Activated B cell treated with CpG ODN at 0.5 μM for 24 hours (primary cell): ENCODE measurements at regions of chr6 and their contacts with region 1.

Region 1: GRCh38 chr6:73309769-73310502 is 44.1 kb downstream of the DPPA5 start:
- DNase-seq: peak; percentile 59
- ATAC-seq: peak; percentile 94
- H3K4me3 Mint-ChIP-seq: peak overlapping the region; percentile 97
- H3K27ac Mint-ChIP-seq: peak overlapping the region; percentile 87
- H3K4me1 Mint-ChIP-seq: peaks cover 18% of the 10 kb centered on the region
- H3K27me3 Mint-ChIP-seq: peaks cover 8% of the 10 kb centered on the region
- CTCF ChIP-seq: no peak

Region 2: DNA sequence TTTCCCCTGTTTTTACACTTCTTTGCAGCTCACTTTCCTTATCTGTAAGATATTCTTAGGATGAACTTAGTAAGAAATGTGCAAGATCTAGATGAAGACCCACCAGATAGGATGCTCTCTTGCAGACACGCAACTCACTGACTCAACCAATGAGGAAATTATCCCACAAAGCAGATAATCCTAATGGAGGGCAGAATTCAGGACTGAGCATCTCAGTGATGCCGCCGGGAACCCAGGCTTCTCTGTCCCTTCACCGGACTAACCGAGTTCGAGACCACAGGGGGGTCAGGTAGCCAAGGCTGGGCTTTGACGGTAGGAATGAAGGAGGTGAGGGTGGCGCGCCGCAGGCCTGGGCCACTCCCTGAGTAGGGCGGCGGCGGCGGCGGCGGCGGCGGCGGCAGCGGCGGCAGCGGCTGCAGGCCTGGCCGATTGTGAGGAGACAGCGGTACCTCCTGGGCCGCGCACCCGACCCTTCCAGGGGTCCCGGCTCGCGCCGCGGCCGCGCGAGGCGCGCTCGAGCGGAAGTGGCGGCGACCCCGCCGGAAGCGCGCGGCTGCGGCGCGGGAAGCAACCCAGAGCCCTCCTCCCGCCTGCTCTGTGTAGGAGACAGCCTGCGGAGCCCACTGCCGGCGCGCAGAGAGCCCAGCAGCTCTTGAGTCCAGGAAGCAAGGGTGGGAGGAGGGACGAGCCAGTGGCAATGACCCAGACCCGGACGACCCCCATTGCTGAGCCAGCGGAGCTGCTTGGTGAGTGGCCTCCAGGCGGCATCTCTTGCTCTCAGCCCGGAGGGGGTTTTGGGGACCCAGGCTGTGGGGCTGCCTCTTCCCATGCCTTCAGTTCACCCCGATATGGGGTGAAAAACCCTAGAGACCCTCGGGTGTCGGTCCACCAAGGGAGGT is 47.0 kb before region 1 on chr6 and contains the start of gene KHDC1:
- CTCF ChIA-PET with region 1: no interaction called
- POLR2A ChIA-PET with region 1: interaction called, 4 read pairs
- intact Hi-C with region 1: loop called (anchors 2 kb)
- DNase-seq: peak; percentile 59
- ATAC-seq: peak; percentile 91
- H3K4me3 Mint-ChIP-seq: peak within 1 kb of the TSS; percentile 88
- H3K27ac Mint-ChIP-seq: peak within 1 kb of the TSS; percentile 70
- H3K4me1 Mint-ChIP-seq: peaks cover 18% of the 10 kb centered on the region
- H3K27me3 Mint-ChIP-seq: no peaks in the 10 kb centered on the region
- CTCF ChIP-seq: no peak
- total RNA-seq, gene KHDC1: 2.4 and 2.7 TPM in 2 replicates

Region 3: DNA sequence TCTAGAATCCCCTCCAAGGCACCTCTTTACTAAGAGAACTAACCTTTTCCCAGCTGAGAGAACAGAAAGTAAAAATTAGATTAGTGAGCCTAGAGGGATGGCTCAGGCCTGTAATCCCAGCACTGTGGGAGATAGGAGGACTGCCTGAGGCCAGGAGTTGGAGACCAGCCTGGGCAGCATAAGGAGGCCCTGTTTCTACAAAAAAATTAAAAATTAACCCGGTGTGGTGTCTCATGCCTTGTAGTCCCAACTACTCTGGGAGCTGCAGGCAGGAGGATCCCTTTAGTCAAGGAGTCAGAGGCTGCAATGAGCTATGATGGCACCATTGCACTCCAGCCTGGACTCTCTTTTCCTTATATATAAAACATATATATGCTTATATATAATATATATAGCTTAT is 65.3 kb after region 1 on chr6:
- CTCF ChIA-PET with region 1: no interaction called
- POLR2A ChIA-PET with region 1: no interaction called
- intact Hi-C with region 1: no loop called
- DNase-seq: no peak
- ATAC-seq: no peak
- H3K4me3 Mint-ChIP-seq: no peak overlapping the region
- H3K27ac Mint-ChIP-seq: no peak overlapping the region
- H3K4me1 Mint-ChIP-seq: peaks cover 6% of the 10 kb centered on the region
- H3K27me3 Mint-ChIP-seq: no peaks in the 10 kb centered on the region
- CTCF ChIP-seq: no peak

Region 4: GRCh38 chr6:73388800-73389512 is 79.0 kb after region 1 on chr6:
- CTCF ChIA-PET with region 1: no interaction called
- POLR2A ChIA-PET with region 1: no interaction called
- intact Hi-C with region 1: loop called (anchors 2 kb)
- DNase-seq: peak; percentile 20
- ATAC-seq: peak; percentile 81
- H3K4me3 Mint-ChIP-seq: peak overlapping the region; percentile 86
- H3K27ac Mint-ChIP-seq: no peak overlapping the region
- H3K4me1 Mint-ChIP-seq: peaks cover 6% of the 10 kb centered on the region
- H3K27me3 Mint-ChIP-seq: peaks cover 3% of the 10 kb centered on the region
- CTCF ChIP-seq: no peak

Region 5: GRCh38 chr6:75243333-75244062 is 1933.6 kb after region 1 on chr6 and contains the start of gene COX7A2:
- CTCF ChIA-PET with region 1: no interaction called
- POLR2A ChIA-PET with region 1: no interaction called
- intact Hi-C with region 1: loop called (anchors 2 kb)
- DNase-seq: peak; percentile 77
- ATAC-seq: peak; percentile 97
- H3K4me3 Mint-ChIP-seq: peak within 1 kb of the TSS; percentile 94
- H3K27ac Mint-ChIP-seq: peak within 1 kb of the TSS; percentile 95
- H3K4me1 Mint-ChIP-seq: peaks cover 21% of the 10 kb centered on the region
- H3K27me3 Mint-ChIP-seq: peaks cover 13% of the 10 kb centered on the region
- CTCF ChIP-seq: no peak
- total RNA-seq, gene COX7A2: 259 and 301 TPM in 2 replicates